ENCODE measurements at regions of chr4 and their contacts with region 1.

Region 1: DNA sequence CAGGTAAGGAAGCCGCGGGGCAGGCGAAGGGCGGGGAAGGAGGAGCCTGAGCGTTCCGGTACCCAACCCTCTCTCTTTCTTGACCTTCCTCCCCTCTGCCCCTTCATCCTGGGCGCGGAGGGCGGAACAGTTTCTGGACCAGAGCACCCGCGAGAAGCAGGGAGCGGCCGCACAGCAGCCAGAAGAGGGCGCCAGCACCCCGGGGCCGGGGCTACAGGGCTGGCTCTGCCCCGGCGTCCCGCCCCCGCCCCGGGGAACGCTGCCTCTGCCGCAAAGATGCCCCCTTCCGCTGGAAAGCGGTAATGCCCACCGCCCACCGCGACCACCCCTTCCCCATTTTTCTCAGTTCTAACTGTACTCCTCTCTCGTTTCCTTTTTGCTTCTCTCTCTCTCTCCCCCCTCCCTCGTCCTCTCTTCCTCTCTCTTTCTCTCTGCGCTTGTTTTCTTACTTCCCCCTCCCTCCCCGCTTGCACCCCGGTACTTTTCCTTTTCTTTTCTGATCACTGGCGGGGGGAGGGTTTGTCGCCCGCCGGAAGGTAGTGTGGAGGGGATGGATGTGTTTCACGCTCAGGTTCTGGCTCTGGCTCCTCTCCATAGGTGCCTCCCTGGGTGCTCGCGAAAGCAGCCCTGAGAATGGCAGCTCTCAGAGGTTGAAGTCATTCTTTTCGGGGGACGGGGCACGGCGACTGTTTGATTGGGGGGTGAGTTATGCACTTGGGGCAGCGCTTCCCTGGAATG is 13.1 kb upstream of the PRDM8 start:
- DNase-seq: peak; percentile 80 to 97 (median 91)
- ATAC-seq: peak; percentile 96
- H3K4me3 ChIP-seq: peak overlapping the region; percentile 98
- H3K4me3 Mint-ChIP-seq: peak overlapping the region; percentile 94 to 100 (median 96)
- H3K27ac ChIP-seq: peak overlapping the region; percentile 84
- H3K27ac Mint-ChIP-seq: peak overlapping the region; percentile 86 to 98 (median 94)
- H3K4me1 ChIP-seq: peaks cover 28 to 34% of the 10 kb centered on the region in 2 donors
- H3K4me1 Mint-ChIP-seq: peaks cover 26 to 56% (median 49%) of the 10 kb centered on the region in 7 donors
- H3K27me3 ChIP-seq: no peaks in the 10 kb centered on the region
- H3K27me3 Mint-ChIP-seq: peaks cover 0 to 34% (median 0%) of the 10 kb centered on the region in 5 donors

Region 2: GRCh38 chr4:79917246-79917645 is 267.0 kb before region 1 on chr4:
- CTCF ChIA-PET with region 1: no interaction called
- POLR2A ChIA-PET with region 1: no interaction called
- intact Hi-C with region 1: loop called (anchors 1 kb)
- DNase-seq: peak in 7 of 9 donors; percentile 10 to 43 (median 22)
- ATAC-seq: peak; percentile 62
- H3K4me3 ChIP-seq: no peak overlapping the region
- H3K4me3 Mint-ChIP-seq: no peak overlapping the region
- H3K27ac ChIP-seq: no peak overlapping the region
- H3K27ac Mint-ChIP-seq: no peak overlapping the region
- H3K4me1 ChIP-seq: no peaks in the 10 kb centered on the region
- H3K4me1 Mint-ChIP-seq: peaks cover 0 to 16% (median 6%) of the 10 kb centered on the region in 7 donors
- H3K27me3 ChIP-seq: no peaks in the 10 kb centered on the region
- H3K27me3 Mint-ChIP-seq: no peaks in the 10 kb centered on the region

Region 3: GRCh38 chr4:80072744-80073472 is 111.3 kb before region 1 on chr4 and contains the start of gene ANTXR2:
- CTCF ChIA-PET with region 1: interaction called, 4 read pairs
- POLR2A ChIA-PET with region 1: interaction called, 23 read pairs
- intact Hi-C with region 1: loop called (anchors 1 kb)
- DNase-seq: peak; percentile 49 to 75 (median 56)
- ATAC-seq: peak; percentile 85
- H3K4me3 ChIP-seq: peak within 1 kb of the TSS; percentile 76
- H3K4me3 Mint-ChIP-seq: peak within 1 kb of the TSS; percentile 82 to 99 (median 96)
- H3K27ac ChIP-seq: peak within 1 kb of the TSS; percentile 86
- H3K27ac Mint-ChIP-seq: peak within 1 kb of the TSS; percentile 88 to 98 (median 96)
- H3K4me1 ChIP-seq: peaks cover 23 to 29% of the 10 kb centered on the region in 2 donors
- H3K4me1 Mint-ChIP-seq: peaks cover 25 to 76% (median 62%) of the 10 kb centered on the region in 7 donors
- H3K27me3 ChIP-seq: no peaks in the 10 kb centered on the region
- H3K27me3 Mint-ChIP-seq: peaks cover 0 to 3% (median 0%) of the 10 kb centered on the region in 5 donors
- total RNA-seq, gene ANTXR2: 20.3 to 69.8 (median 50.0) TPM

Region 4: GRCh38 chr4:80153874-80154544 is 30.2 kb before region 1 on chr4:
- CTCF ChIA-PET with region 1: interaction called, 5 read pairs
- POLR2A ChIA-PET with region 1: interaction called, 10 read pairs
- intact Hi-C with region 1: no loop called
- DNase-seq: no peak
- ATAC-seq: no peak
- H3K4me3 ChIP-seq: no peak overlapping the region
- H3K4me3 Mint-ChIP-seq: peak overlapping the region in 1 of 10 donors; percentile 6
- H3K27ac ChIP-seq: no peak overlapping the region
- H3K27ac Mint-ChIP-seq: peak overlapping the region in 2 of 9 donors; percentile 30 to 63
- H3K4me1 ChIP-seq: no peaks in the 10 kb centered on the region
- H3K4me1 Mint-ChIP-seq: peaks cover 0 to 14% (median 10%) of the 10 kb centered on the region in 7 donors
- H3K27me3 ChIP-seq: no peaks in the 10 kb centered on the region
- H3K27me3 Mint-ChIP-seq: peaks cover 0 to 6% (median 0%) of the 10 kb centered on the region in 5 donors

Region 5: DNA sequence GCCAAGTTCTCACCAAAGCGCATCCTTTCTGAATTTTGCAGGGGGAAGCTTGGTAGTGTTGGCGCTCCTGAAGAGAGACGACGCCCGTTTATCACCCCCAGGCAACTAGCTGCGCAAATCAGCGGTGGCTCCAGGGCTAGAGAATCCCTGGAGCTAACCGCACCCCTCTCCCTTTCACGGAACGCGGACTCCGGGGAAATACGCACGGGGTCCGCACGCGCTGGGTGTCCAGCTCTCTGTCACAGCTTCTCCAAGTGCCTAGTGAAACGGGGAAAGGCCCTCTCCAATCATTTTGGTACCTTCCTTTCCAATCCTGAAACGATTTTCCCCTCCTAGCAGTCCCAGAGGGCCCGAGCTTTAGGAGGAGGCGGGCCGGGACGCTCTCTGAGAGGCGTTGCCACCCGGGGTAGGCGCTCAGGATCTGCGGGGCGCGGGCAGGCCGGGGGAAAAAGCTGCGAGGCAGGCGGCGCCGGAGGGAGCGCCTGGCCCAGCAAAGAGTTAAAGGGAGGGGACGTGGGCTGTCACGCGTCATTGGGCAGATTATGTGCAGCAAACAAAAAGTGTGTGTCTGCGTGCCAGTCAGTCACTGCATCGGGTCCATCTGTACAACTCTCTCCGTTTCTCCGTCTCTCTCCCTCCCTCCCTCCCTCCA is 12.8 kb after region 1 on chr4 and contains the start of gene PRDM8:
- CTCF ChIA-PET with region 1: interaction called, 24 read pairs
- POLR2A ChIA-PET with region 1: interaction called, 34 read pairs
- intact Hi-C with region 1: loop called in 1 of 2 experiments (anchors 1 kb)
- DNase-seq: peak in 5 of 9 donors; percentile 26 to 48 (median 40)
- ATAC-seq: peak; percentile 65
- H3K4me3 ChIP-seq: peak within 1 kb of the TSS; percentile 32
- H3K4me3 Mint-ChIP-seq: peak within 1 kb of the TSS; percentile 51 to 89 (median 80)
- H3K27ac ChIP-seq: no peak within 1 kb of the TSS
- H3K27ac Mint-ChIP-seq: peak within 1 kb of the TSS in 4 of 9 donors; percentile 20 to 67 (median 28)
- H3K4me1 ChIP-seq: peaks cover 8 to 12% of the 10 kb centered on the region in 2 donors
- H3K4me1 Mint-ChIP-seq: peaks cover 25 to 44% (median 34%) of the 10 kb centered on the region in 7 donors
- H3K27me3 ChIP-seq: no peaks in the 10 kb centered on the region
- H3K27me3 Mint-ChIP-seq: peaks cover 33 to 81% (median 42%) of the 10 kb centered on the region in 5 donors
- total RNA-seq, gene PRDM8: 4.2 to 13.7 (median 10.4) TPM

Region 6: DNA sequence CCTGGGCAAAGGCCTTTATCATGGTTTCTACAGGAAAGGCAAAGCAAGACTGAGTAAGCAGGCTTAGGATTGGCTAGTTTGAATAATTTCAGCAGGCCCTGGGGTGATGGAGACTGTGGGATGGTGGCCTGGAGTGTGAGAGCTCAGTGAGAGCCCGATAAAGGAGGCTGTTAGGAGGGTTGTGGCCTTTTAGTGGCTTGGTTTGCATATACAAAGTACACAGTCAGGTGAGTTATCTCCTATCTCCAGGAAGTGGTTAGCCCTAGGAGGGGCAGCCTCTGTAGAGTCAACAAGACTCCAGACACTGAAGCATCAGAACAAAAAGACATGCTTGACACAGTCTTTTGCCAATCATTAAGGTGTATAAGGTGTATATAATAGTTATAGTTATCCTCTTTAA is 308.5 kb after region 1 on chr4:
- CTCF ChIA-PET with region 1: no interaction called
- POLR2A ChIA-PET with region 1: no interaction called
- intact Hi-C with region 1: loop called (anchors 10 kb)
- DNase-seq: peak in 7 of 9 donors; percentile 61 to 89 (median 83)
- ATAC-seq: peak; percentile 98
- H3K4me3 ChIP-seq: no peak overlapping the region
- H3K4me3 Mint-ChIP-seq: peak overlapping the region; percentile 53 to 87 (median 67)
- H3K27ac ChIP-seq: peak overlapping the region; percentile 25
- H3K27ac Mint-ChIP-seq: peak overlapping the region; percentile 92 to 99 (median 97)
- H3K4me1 ChIP-seq: peaks cover 36 to 43% of the 10 kb centered on the region in 2 donors
- H3K4me1 Mint-ChIP-seq: peaks cover 28 to 74% (median 69%) of the 10 kb centered on the region in 7 donors
- H3K27me3 ChIP-seq: no peaks in the 10 kb centered on the region
- H3K27me3 Mint-ChIP-seq: no peaks in the 10 kb centered on the region

Measured in naive thymus-derived CD4-positive, alpha-beta T cell (primary cell).